Mammary epithelial cell (primary cell): ENCODE measurements at regions of chr11 and their contacts with region 1.

Region 1: DNA sequence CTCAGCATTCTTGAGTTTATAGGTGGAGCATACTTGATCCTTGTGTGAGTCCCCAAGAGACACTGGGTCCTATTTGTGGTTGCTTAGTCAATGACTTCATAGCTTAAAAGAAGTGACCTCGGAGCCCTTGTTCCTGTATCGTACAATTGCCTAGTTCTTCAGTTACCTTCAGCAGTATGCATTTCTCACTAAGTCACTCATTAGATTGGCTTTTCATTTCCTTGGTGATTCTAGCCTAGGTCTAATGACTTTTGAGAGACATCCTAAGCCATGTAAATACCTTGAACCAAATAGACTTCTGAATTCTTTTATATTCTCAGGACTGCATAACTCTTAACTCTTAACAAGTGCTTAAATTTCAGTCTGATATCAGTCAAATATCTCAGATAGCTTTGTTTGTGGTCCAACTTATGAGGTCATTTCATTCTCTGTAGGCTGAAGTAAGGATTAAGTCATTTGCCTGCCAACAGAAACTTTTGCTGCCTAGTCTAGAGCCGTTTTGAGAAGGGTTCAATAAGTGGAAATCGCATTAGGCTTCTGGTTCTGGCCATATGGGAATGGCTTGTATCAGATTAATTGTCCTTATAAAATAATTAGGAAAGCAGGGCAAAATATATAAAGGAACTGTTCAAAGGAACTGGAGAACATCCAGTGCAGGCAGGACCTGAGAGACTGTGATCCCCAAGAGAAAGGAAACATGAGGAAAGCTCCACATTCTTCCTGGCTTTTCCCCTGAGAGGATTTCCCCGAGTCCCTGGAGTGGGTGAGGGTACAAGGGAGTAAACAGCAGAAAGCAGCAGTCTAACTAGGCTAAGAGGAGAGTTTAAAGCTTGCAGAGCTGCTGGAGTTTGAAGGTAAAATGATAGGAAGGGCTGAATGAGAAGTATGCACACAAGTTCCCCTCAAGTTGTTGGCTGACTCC is 39.9 kb downstream of the TRAF6 start:
- DNase-seq: peak; percentile 12
- H3K4me3 ChIP-seq: no peak overlapping the region
- H3K27ac ChIP-seq: no peak overlapping the region
- H3K4me1 ChIP-seq: peaks cover 9% of the 10 kb centered on the region
- H3K27me3 ChIP-seq: no peaks in the 10 kb centered on the region
- CTCF ChIP-seq: no peak

Region 2: DNA sequence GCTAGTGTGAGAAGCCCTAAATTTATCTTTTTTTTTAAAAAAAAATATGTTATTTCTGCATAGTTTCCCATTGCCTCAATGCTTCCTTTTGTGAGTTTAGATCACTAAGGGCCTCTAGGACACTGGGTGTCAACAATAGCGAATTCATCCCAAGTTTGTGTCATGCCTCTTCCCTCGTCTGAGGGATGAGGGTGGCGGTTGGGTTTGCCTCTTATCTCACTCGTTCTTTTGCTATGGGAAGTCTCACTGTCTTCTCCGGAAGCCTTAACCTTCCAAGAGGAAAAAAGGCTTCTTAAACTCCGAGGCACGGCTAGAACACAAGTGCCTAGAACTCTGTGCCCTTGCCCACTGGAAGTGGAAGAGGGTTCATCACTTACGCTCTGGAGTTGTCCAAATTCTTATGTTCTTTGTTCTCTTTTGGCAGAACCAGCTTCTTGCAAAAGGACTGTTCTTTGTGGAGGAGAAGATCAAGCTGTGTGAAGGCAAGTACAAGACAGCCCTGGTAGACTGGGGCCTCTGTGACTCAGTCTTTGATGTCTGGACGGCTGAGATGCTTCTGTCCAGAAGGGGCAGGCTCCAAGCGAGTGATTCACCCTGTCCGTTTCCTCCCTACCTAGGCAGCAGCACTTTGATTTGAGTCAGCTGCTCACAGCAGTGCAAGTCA is 38.6 kb before region 1 on chr11:
- CTCF ChIA-PET with region 1: no interaction called
- dilution Hi-C with region 1: loop called (anchors 5 kb)
- in situ Hi-C with region 1: no loop called
- intact Hi-C with region 1: no loop called
- DNase-seq: peak; percentile 93
- H3K4me3 ChIP-seq: no peak overlapping the region
- H3K27ac ChIP-seq: no peak overlapping the region
- H3K4me1 ChIP-seq: peaks cover 23% of the 10 kb centered on the region
- H3K27me3 ChIP-seq: no peaks in the 10 kb centered on the region
- CTCF ChIP-seq: peak; percentile 11 to 35